Right ventricle myocardium inferior (tissue), 1 donor: ENCODE measurements at regions of chr10 and their contacts with region 1.

Region 1: DNA sequence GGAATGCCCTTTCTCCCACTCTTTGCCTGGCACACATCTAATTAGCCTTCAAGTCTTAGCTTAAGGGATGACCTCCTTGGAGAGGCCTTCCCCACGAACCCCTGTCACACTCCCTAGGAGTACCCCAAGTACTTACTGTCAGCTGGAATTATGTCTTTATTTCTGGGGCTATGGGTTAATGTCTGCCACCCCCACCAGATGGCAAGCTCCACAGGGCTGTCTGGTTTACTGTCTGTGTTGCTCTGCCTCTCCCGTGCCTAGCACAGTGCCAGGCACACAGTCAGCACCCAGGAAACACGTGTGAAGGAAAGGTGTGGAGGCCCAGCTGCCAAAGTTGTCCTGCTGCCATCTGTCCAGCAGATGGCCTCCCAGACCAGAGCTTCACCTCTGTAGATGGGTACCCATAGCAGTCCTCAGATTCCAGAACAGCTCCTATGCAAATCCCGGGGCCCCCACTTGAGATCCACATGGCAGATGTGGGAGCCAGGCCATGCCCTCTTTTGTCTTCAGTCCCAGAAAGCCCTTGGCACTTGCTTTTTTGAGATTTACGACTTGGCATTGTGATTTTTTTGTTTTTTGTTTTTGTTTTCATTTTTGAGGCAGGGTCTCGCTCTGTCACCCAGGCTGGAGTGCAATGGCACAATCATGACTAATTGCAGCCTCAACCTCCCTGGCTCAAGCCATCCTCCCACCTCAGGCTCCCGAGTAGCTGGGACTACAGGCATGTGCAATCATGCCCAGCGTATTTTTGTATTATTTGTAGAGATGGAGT is 17.2 kb upstream of the PALD1 start:
- DNase-seq: peak; percentile 73
- ATAC-seq: peak; percentile 55

Region 2: DNA sequence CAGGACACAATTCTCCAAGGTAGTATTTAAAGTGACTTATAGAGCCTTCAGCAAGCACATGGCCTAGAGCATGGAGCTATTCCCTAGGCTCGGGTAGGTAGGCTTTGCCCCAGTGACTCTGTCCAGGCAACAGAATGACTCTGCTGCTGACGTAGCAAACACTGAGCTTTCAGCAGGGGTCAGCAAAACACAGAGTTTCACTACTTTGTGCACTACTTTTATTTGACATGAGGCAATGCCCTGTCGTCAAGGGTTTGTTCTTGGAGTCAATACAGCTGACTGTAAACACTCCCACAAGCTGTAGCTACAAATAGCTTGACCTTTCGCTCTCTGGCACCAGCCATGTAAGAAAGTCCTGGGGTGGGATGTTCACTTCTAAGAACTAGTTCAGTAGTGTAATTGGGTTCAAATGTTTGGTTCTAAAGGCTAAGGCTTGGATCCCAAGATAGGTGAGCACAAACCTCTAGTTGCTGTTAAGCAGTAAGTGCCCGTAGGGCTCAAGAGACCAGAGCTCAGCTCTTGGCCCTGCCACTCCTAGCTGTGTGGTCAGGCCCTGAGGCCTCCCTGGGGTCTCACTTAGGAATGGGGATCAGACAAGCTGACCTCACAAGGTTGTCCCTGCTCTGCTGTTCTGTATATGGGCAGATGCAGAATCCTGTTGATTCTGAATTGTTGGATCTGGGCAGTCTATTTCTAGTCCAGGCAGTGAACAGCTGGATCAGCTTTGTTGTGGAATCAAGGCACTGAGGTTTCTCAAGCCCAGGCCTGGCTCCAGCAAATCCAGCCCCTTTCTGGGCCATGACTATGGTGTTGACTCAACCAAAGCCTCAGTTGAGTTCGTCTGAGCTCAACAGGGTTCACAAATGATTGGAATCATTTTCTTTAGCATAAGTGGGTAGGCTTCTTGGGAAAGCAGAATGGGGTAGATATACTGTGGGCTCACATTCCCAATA is 30.6 kb before region 1 on chr10:
- intact Hi-C with region 1: loop called (anchors 2 kb)
- DNase-seq: no peak
- ATAC-seq: peak; percentile 86

Region 3: DNA sequence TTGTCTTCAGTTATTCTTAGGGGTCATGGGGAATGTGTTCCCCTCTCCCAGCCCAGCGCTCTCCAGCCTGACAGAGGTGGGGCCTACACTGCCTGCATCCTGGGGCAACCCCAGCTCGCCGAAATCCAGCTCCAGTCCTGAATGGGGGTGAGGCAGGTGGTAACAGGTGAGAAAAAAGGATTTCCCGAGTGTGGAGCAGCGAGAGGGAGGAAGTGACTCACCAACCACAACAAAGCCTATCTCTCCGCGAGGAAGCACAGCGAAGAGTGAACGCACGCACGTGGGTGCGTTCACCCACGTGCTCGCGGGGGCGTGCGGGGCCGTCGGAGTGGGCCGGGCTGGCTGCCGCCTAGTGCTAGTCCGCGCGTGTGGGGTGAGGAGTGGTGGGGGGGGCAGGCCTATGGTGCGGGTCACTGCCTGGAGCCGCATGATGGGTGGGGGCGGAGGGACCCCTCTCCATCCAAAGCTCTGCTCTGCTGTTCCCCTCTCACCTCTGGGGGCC is 16.3 kb after region 1 on chr10:
- intact Hi-C with region 1: loop called (anchors 2 kb)
- DNase-seq: peak; percentile 49
- ATAC-seq: no peak

Region 4: GRCh38 chr10:70508912-70509756 is 47.7 kb after region 1 on chr10:
- intact Hi-C with region 1: loop called (anchors 5 kb)
- DNase-seq: peak; percentile 82
- ATAC-seq: peak; percentile 69

Region 5: DNA sequence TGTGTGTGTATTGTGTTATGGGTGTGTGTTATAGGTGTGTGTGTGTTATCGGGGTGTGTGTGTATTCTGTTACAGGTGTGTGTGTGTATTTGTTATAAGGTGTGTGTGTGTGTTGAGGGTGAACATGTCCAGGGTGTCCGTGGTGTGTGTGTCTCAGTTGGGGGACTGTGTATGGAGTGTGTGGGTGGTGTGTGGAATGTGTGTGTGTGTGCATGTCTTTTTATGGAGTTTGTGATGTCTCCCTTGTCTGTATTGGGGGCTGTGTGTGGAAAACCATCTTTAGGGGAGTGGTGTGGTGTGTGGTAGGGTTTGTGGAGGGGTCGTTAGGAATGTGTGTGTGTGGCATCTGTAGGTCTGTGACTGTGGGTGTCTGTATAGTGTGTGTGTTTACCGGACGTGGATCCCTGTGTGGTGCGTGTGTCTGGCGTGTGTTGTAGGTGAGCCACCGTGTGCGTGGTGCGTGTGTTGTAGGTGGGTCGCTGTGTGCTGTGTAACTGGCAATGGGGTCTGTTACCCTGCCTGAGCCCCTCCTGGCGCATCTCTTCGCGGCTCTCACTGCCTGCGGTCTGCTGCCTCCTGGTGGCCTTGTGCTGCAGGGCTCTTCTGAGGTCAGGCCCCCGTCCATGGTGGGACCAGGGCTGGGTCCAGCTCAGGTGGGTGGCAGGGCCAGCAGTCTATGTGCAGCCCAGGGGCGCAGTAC is 78.8 kb after region 1 on chr10:
- intact Hi-C with region 1: loop called (anchors 1 kb)
- DNase-seq: no peak
- ATAC-seq: peak; percentile 51

Region 6: DNA sequence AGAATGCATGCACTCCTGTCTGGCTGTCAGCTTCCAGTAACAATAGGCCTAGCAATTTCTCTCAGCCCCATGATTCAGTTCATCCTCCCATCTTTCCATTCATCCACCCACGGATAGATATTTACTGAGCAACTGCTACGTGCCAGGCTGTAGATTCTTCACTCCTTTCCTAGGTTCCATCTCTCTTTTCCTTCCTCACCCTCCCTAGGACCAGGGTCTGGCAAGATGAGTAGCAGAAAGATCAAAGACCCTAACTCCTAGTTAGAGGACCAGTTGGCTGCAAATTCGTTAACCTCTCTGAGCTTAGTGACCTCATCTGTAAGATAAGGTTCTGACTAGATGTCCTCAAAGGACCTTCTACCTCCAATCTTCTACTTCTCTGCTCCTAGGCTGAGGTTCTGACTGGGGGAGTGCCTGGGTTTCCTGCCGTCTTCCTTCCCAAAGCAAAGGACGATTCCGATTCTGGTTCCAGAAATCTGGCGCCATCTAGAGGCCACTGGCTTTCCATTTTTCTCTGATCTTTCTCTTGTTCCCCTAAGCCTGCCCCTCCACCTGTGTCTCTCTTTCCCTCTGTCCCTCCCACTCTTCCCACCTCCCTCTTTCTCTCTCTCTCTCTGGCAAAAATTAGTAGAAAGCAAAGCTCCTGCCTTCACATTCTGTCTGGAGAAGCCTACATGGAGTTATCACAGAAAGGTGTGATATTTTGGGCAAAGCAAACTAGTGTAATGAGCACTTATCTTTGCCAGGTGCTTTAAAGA is 297.5 kb after region 1 on chr10:
- intact Hi-C with region 1: loop called (anchors 2 kb)
- DNase-seq: no peak
- ATAC-seq: peak; percentile 42

Region 7: DNA sequence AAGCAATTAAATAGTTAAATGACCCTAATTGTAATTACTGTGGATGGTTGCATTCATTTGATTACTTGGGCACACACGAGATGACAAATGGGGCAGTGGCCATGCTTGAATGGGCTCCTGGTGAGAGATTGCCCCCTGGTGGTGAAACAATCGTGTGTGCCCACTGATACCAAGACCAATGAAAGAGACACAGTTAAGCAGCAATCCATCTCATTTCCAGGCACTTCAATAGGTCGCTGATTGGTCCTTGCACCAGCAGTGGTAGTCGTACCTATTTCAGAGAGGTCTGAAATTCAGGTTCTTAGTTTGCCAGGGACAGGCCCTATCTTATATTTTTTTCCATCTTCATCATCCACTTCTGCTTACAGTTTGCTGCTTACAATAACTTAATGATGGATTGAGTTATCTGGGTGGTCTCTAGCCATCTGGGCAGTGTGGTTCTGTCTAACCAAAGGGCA is 418.7 kb after region 1 on chr10:
- intact Hi-C with region 1: loop called (anchors 10 kb)
- DNase-seq: peak; percentile 79
- ATAC-seq: peak; percentile 67